ENCODE measurements at regions of chr4 and their contacts with region 1.

Region 1: DNA sequence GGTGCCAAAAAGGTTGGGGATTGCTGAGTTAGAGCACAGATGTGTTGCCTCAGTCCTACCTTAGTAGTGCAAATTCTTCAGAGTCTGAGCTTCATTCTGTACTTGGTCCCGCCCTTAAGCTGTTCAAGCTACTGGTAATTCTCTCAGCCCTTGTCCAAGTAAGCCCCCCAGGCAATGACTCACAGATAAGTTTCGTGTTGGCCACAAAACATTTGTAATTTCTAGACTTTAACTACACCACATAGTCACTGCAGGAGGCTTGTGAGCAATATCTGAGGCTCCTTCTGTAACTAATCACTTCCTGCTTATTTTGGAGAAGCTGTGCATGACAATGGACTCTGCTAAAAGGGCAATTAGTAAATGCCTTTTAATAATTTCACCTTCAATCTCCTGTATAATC is 1420.5 kb downstream of the PCDH7 start:
- DNase-seq: peak; percentile 97
- H3K4me3 ChIP-seq: no peak overlapping the region
- H3K27ac ChIP-seq: no peak overlapping the region
- H3K4me1 ChIP-seq: peaks cover 17% of the 10 kb centered on the region
- H3K27me3 ChIP-seq: no peaks in the 10 kb centered on the region
- CTCF ChIP-seq: no peak

Region 2: DNA sequence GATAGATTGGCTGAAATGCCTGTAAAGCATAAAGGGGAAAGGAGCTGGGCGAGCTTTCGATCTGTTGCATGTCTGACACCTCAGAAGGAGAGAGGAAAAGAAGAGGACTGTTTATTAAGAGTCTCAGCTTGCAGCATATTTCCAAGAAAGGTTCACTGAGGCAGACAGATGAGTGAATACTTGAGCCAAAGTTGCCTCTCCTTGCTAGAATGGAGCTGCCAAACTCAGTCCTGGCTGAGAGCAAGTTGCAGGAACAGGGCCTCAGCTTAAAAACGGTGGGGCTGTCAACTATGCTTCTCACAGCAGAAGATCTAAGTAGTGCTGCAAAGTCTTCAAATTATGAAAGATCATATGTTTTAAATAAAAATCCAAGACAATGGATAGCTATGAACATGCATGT is 712.9 kb before region 1 on chr4:
- CTCF ChIA-PET with region 1: no interaction called
- POLR2A ChIA-PET with region 1: no interaction called
- intact Hi-C with region 1: no loop called
- DNase-seq: no peak
- H3K4me3 ChIP-seq: no peak overlapping the region
- H3K27ac ChIP-seq: no peak overlapping the region
- H3K4me1 ChIP-seq: no peaks in the 10 kb centered on the region
- H3K27me3 ChIP-seq: no peaks in the 10 kb centered on the region
- CTCF ChIP-seq: no peak

Region 3: GRCh38 chr4:32429151-32429550 is 288.5 kb after region 1 on chr4:
- CTCF ChIA-PET with region 1: no interaction called
- POLR2A ChIA-PET with region 1: no interaction called
- intact Hi-C with region 1: loop called (anchors 10 kb)
- DNase-seq: peak; percentile 71
- H3K4me3 ChIP-seq: no peak overlapping the region
- H3K27ac ChIP-seq: no peak overlapping the region
- H3K4me1 ChIP-seq: no peaks in the 10 kb centered on the region
- H3K27me3 ChIP-seq: no peaks in the 10 kb centered on the region
- CTCF ChIP-seq: no peak